CD14-positive monocyte (primary cell): ENCODE measurements at regions of chr10 and their contacts with region 1.

Region 1: GRCh38 chr10:124641282-124642087 is 102.7 kb downstream of the FAM53B start:
- DNase-seq: peak; percentile 84 to 91 (median 85)
- H3K4me3 ChIP-seq: peak overlapping the region in 2 of 3 experiments; percentile 2 to 62
- H3K4me3 Mint-ChIP-seq: peak overlapping the region; percentile 66 to 89
- H3K27ac ChIP-seq: peak overlapping the region; percentile 93 to 99
- H3K27ac Mint-ChIP-seq: peak overlapping the region; percentile 96 to 99 (median 98)
- H3K4me1 ChIP-seq: peaks cover 93 to 100% of the 10 kb centered on the region in 2 donors
- H3K4me1 Mint-ChIP-seq: peaks cover 94% of the 10 kb centered on the region
- H3K27me3 ChIP-seq: no peaks in the 10 kb centered on the region
- H3K27me3 Mint-ChIP-seq: peaks cover 0 to 2% (median 0%) of the 10 kb centered on the region in 3 donors
- CTCF ChIP-seq: no peak

Region 2: DNA sequence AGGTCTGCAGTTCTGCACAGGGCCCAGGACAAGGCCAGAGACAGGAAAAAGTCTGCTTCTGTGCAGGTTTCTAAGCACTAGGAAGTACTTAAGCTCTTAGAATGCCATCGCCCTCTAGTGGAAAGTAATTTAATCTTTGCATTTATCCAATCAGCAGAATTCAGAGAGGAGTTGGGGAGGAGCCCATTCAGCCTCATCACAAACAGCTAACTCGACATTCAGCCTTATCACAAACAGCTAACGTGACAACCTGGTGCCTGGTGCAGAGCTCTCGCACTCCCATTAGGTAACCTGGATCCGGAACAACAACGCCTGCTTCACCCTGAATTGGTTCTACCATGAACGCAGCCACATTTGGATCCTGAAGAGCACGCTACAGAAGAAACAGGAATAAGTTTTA is 237.9 kb before region 1 on chr10:
- intact Hi-C with region 1: no loop called
- DNase-seq: peak; percentile 63 to 79 (median 65)
- H3K4me3 ChIP-seq: no peak overlapping the region
- H3K4me3 Mint-ChIP-seq: no peak overlapping the region
- H3K27ac ChIP-seq: no peak overlapping the region
- H3K27ac Mint-ChIP-seq: peak overlapping the region in 1 of 7 donors; percentile 52
- H3K4me1 ChIP-seq: no peaks in the 10 kb centered on the region
- H3K4me1 Mint-ChIP-seq: peaks cover 5% of the 10 kb centered on the region
- H3K27me3 ChIP-seq: no peaks in the 10 kb centered on the region
- H3K27me3 Mint-ChIP-seq: peaks cover 0 to 2% (median 0%) of the 10 kb centered on the region in 3 donors
- CTCF ChIP-seq: peak; percentile 58

Region 3: DNA sequence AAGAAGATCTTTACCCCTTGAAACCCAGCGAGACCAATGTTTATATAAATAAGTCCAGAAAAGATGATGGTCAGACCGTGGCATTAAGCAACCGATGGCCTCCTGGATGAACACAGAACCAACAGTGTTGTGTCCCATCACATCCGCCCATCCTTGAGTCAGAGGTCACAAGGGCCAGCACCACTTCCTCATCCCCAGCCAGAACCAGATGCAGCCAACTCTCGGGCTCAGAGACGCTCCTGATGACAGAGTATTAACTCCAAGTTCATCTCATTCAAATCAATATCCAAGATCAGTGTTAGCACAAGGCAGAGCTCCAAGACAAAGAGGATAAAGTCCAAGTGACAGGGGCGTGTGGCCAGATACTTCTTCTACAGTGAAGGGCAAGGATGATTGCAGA is 39.2 kb after region 1 on chr10:
- intact Hi-C with region 1: loop called (anchors 5 kb)
- DNase-seq: peak; percentile 94 to 97 (median 95)
- H3K4me3 ChIP-seq: peak overlapping the region in 1 of 3 experiments; percentile 26
- H3K4me3 Mint-ChIP-seq: peak overlapping the region in 1 of 2 donors; percentile 63
- H3K27ac ChIP-seq: peak overlapping the region; percentile 99
- H3K27ac Mint-ChIP-seq: peak overlapping the region; percentile 93 to 98 (median 96)
- H3K4me1 ChIP-seq: peaks cover 98 to 99% of the 10 kb centered on the region in 2 donors
- H3K4me1 Mint-ChIP-seq: peaks cover 89% of the 10 kb centered on the region
- H3K27me3 ChIP-seq: no peaks in the 10 kb centered on the region
- H3K27me3 Mint-ChIP-seq: peaks cover 0 to 3% (median 0%) of the 10 kb centered on the region in 3 donors
- CTCF ChIP-seq: no peak